ENCODE measurements at regions of chr5 and their contacts with region 1.

Region 1: GRCh38 chr5:148145916-148146315 is 22.4 kb upstream of the SPINK14 start:
- DNase-seq: peak; percentile 100
- ATAC-seq: peak; percentile 92
- H3K4me3 ChIP-seq: peak overlapping the region; percentile 19; the same call in 1 of the 2 replicates
- H3K27ac ChIP-seq: peak overlapping the region; percentile 81
- H3K4me1 ChIP-seq: peaks cover 48% of the 10 kb centered on the region
- H3K27me3 ChIP-seq: no peaks in the 10 kb centered on the region
- CTCF ChIP-seq: no peak

Region 2: GRCh38 chr5:146369691-146370090 is 1776.2 kb before region 1 on chr5:
- CTCF ChIA-PET with region 1: no interaction called
- POLR2A ChIA-PET with region 1: no interaction called
- intact Hi-C with region 1: no loop called
- DNase-seq: peak; percentile 53
- ATAC-seq: peak; percentile 32
- H3K4me3 ChIP-seq: no peak overlapping the region
- H3K27ac ChIP-seq: no peak overlapping the region
- H3K4me1 ChIP-seq: 0 out of 2 replicates have a peak, but pooled peaks cover 5% of the 10 kb centered on the region
- H3K27me3 ChIP-seq: peaks cover 6% of the 10 kb centered on the region
- CTCF ChIP-seq: no peak

Region 3: DNA sequence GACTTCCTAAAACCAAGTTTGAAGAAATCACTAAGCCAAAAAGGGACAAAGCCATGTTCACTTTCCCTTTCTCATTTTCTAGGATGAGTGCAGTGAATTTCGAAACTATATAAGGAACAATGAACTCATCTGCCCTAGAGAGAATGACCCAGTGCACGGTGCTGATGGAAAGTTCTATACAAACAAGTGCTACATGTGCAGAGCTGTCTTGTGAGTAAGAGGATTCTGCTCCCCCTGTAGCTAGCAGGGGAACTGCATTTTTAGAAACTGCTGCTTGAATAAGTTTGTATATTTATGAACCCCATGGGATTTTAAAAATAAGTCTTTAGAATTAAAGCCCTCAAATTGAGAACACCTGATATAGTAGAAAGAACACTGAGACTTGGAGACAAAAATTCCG is 20.3 kb before region 1 on chr5:
- CTCF ChIA-PET with region 1: interaction called, 15 read pairs
- POLR2A ChIA-PET with region 1: no interaction called
- intact Hi-C with region 1: no loop called
- DNase-seq: peak; percentile 60
- ATAC-seq: peak; percentile 81
- H3K4me3 ChIP-seq: no peak overlapping the region
- H3K27ac ChIP-seq: no peak overlapping the region
- H3K4me1 ChIP-seq: peaks cover 2% of the 10 kb centered on the region; the same call in 1 of the 2 replicates
- H3K27me3 ChIP-seq: no peaks in the 10 kb centered on the region
- CTCF ChIP-seq: peak; percentile 66

Region 4: GRCh38 chr5:148172377-148172776 is 26.5 kb after region 1 on chr5:
- CTCF ChIA-PET with region 1: no interaction called
- POLR2A ChIA-PET with region 1: no interaction called
- intact Hi-C with region 1: loop called (anchors 1 kb)
- DNase-seq: peak; percentile 72
- ATAC-seq: peak; percentile 86
- H3K4me3 ChIP-seq: no peak overlapping the region
- H3K27ac ChIP-seq: peak overlapping the region; percentile 30
- H3K4me1 ChIP-seq: peaks cover 21% of the 10 kb centered on the region
- H3K27me3 ChIP-seq: no peaks in the 10 kb centered on the region
- CTCF ChIP-seq: no peak